ENCODE measurements at regions of chr5 and their contacts with region 1.

Region 1: DNA sequence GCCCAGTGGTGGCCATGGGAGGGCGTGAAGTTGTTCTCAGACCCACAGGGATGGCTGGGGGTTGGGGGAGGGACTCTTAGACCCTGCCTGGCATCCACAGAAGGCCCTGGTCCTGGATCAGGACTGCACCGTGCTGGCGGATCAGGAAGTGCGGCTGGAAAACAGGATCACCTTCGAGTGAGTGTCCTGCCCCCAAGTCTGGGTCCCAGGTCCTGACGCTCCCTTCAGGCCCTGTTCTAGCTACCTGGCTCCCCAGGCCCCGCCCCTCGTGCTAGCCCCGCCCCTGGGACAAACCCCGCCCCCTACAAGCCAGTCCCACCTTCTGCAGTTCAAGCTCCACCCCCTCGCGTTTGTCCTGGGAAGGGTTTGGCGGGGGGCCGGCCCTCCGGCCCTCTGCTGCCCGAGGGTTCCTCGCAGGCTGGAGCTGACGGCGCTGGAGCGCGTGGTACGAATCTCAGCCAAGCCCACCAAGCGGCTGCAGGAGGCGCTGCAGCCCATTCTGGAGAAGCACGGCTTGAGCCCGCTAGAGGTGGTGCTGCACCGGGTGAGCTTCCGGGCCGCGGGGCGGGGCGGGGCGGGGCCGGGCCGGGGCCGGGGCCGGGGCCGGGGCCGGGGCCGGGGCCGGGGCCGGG is 12.9 kb downstream of the RGS14 start:
- DNase-seq: peak; percentile 35
- H3K4me3 ChIP-seq: peak overlapping the region; percentile 49
- H3K27me3 ChIP-seq: no peaks in the 10 kb centered on the region; the same call in none of the 2 replicates
- CTCF ChIP-seq: peak; percentile 68

Region 2: DNA sequence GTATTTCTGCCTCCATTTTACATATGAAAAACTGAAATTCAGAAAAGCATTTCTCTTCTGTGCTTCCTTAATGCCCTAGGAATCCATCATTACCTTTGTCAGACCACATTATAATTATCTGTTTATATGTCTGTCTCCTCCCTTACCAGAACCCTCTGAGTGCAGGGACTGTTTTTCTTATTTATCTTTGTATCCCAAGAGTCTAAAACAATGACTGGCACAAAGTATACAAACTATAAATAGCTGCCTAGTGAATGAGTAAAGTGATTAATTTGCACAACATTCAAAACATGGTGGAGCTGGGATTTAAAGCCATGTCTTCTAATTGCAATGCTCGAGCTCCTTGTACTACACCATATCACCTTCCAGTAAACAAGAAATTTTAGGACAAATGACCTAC is 422.1 kb before region 1 on chr5:
- CTCF ChIA-PET with region 1: no interaction called
- POLR2A ChIA-PET with region 1: no interaction called
- DNase-seq: no peak
- H3K4me3 ChIP-seq: no peak overlapping the region
- H3K27me3 ChIP-seq: no peaks in the 10 kb centered on the region
- CTCF ChIP-seq: no peak

Region 3: GRCh38 chr5:177357459-177358351 is 12.9 kb before region 1 on chr5 and contains the start of gene RGS14:
- CTCF ChIA-PET with region 1: interaction called, 16 read pairs
- POLR2A ChIA-PET with region 1: no interaction called
- DNase-seq: no peak
- H3K4me3 ChIP-seq: no peak within 1 kb of the TSS
- H3K27me3 ChIP-seq: peaks cover 5% of the 10 kb centered on the region
- CTCF ChIP-seq: no peak
- polyA plus RNA-seq, gene RGS14: 4.1 and 6.0 TPM in 2 replicates

Region 4: GRCh38 chr5:177382423-177383029 is 11.9 kb after region 1 on chr5:
- CTCF ChIA-PET with region 1: interaction called, 37 read pairs
- POLR2A ChIA-PET with region 1: no interaction called
- DNase-seq: no peak
- H3K4me3 ChIP-seq: no peak overlapping the region
- H3K27me3 ChIP-seq: peaks cover 25% of the 10 kb centered on the region
- CTCF ChIP-seq: peak; percentile 41; the same call in 1 of the 2 replicates

Region 5: DNA sequence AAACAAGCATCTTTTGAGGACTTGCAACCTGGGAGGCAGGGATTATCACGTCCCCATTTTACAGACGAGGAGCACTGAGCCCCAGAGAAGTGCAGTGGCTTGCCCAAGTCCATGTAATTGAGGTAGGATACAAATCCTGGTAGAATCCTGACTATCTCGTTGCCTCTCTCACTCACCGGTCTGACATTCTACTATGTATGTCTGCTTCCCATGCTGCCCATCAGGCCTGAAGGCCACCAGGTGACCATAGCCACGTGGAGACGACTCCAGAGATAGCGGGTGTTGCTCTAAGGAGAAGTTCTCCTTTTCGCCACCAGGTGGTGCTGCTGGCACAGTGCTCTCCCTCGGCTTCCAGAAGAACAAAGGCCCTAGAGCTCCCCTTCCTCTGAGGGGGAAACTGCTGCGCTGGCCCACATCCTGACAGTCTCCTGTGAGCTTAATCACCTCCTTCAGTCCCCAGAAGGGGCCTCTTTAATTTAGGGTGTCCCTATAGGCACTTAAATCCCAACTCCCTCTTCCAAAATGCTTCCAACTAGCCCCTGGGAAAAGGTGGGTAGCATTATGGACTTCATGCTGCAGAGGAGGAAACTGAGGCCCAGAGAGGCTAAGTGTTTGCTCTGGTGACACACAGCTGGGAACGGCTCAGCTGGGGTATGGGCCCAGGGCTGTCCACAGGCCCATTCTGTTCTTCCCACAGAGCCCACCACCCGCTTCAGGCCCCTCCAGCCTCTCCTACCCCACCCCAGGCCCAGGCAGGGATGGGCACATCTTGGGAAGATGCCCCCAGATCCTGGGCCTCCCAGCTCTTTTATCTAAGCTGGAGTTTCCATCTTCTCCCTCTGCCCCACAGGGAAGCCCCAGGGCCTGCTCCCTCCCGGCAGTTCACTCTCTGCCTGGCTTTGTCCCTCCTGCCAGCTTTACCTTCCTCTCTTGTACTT is 20.0 kb after region 1 on chr5:
- CTCF ChIA-PET with region 1: interaction called, 50 read pairs
- POLR2A ChIA-PET with region 1: no interaction called
- DNase-seq: no peak
- H3K4me3 ChIP-seq: no peak overlapping the region
- H3K27me3 ChIP-seq: peaks cover 11% of the 10 kb centered on the region
- CTCF ChIP-seq: peak; percentile 95

Measured in BJ (cell line).